Activated CD4-positive, alpha-beta memory T cell treated with anti-CD3 and anti-CD28 coated beads for 36 hours (primary cell): ENCODE measurements at regions of chr17 and their contacts with region 1.

Region 1: DNA sequence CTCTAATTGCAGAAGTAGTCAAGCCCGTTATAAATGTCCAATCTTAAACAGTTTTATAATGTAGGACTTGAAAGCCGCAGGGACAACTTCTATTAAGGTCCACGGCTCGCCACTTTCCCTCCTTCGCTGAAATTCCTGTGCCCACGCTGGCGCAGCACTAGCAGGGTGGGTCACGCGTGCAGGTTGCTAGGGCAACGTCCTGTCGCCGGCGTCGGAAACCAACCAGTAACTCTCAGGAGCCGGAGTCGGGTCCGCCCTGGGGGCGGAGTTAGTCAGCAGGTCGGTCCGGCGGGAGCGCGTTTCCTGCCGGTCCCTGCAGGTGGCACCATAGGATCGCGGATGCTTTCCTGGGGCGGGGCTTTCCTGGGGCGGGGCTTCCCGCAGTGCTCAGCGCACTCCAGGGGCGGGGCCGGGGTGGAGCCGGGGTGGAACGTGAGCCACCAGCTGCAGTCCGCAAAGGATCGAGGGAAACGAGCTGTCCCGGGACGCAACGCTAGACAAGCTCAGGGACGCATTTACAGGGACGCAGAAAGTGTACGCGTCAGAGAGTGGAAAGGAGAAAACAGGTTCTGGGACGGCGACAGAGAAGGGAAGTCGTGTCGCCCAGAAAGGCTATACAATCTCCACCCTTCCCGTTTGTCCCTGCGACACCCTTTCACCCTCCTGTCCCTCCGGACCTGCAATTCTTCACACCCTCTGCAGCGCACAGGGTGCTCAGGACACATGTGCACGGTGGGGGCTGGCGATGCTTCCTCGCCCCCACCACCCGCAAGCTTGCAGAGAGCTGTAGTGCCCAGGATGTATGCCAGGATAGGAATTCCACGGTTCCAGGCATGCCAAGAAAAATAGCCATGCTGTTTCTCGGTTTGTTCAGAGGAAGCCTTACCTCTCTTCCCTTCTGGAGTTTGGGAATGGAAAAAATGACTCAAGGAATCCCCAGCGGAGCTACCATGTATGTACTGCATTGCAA is 12.4 kb downstream of the COPZ2 start:
- DNase-seq: peak; percentile 99
- H3K4me3 Mint-ChIP-seq: peak overlapping the region; percentile 82
- H3K27ac Mint-ChIP-seq: peak overlapping the region; percentile 34
- H3K4me1 Mint-ChIP-seq: peaks cover 22% of the 10 kb centered on the region
- H3K27me3 Mint-ChIP-seq: peaks cover 11% of the 10 kb centered on the region

Region 2: DNA sequence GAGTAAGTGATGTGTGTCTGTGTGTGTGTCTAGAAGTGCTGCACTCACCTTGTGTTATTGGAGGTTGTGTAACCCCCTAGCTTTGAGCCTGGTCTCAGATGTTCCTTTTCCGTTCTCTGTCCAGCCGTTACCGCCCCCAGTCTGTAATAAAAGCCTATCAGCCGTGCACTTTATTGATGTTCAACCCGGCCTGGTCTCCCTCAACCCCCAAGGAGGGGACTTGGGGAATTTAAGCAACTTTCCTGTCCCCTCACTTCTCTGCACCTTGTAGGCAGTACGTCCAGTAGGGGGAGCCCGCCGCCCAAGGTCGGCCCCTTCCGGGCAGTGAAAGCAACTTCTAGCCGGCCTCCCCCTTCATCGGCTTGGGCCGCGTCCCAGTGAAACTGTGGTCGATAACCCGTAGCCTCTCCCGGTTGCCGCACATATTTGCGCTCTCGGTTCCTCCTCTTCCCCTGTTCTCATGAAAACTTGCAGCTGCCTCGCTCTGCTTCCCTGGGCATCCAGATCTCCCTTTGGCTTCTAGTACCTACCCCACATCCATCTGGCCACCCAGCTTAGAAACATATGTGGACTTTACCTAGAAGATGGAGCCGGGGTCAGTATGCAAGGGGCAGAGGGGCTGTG is 76.0 kb before region 1 on chr17:
- CTCF ChIA-PET with region 1: interaction called, 15 read pairs
- POLR2A ChIA-PET with region 1: no interaction called
- intact Hi-C with region 1: no loop called
- DNase-seq: peak; percentile 87
- H3K4me3 Mint-ChIP-seq: peak overlapping the region; percentile 51
- H3K27ac Mint-ChIP-seq: peak overlapping the region; percentile 63
- H3K4me1 Mint-ChIP-seq: peaks cover 28% of the 10 kb centered on the region
- H3K27me3 Mint-ChIP-seq: no peaks in the 10 kb centered on the region

Region 3: GRCh38 chr17:48037036-48037837 is 12.0 kb after region 1 on chr17 and contains the start of gene COPZ2:
- CTCF ChIA-PET with region 1: interaction called, 40 read pairs
- POLR2A ChIA-PET with region 1: interaction called, 4 read pairs
- intact Hi-C with region 1: no loop called
- DNase-seq: peak; percentile 76
- H3K4me3 Mint-ChIP-seq: peak within 1 kb of the TSS; percentile 78
- H3K27ac Mint-ChIP-seq: no peak within 1 kb of the TSS
- H3K4me1 Mint-ChIP-seq: peaks cover 7% of the 10 kb centered on the region
- H3K27me3 Mint-ChIP-seq: peaks cover 36% of the 10 kb centered on the region
- total RNA-seq, gene COPZ2: 4.9 to 6.2 TPM

Region 4: GRCh38 chr17:48068491-48068961 is 43.3 kb after region 1 on chr17:
- CTCF ChIA-PET with region 1: interaction called, 137 read pairs
- POLR2A ChIA-PET with region 1: interaction called, 3 read pairs
- intact Hi-C with region 1: no loop called
- DNase-seq: peak; percentile 24
- H3K4me3 Mint-ChIP-seq: no peak overlapping the region
- H3K27ac Mint-ChIP-seq: no peak overlapping the region
- H3K4me1 Mint-ChIP-seq: no peaks in the 10 kb centered on the region
- H3K27me3 Mint-ChIP-seq: no peaks in the 10 kb centered on the region

Region 5: GRCh38 chr17:48101012-48101720 is 75.9 kb after region 1 on chr17 and contains the start of gene CBX1:
- CTCF ChIA-PET with region 1: interaction called, 9 read pairs
- POLR2A ChIA-PET with region 1: no interaction called
- intact Hi-C with region 1: loop called (anchors 1 kb)
- DNase-seq: peak; percentile 96
- H3K4me3 Mint-ChIP-seq: peak within 1 kb of the TSS; percentile 98
- H3K27ac Mint-ChIP-seq: peak within 1 kb of the TSS; percentile 89
- H3K4me1 Mint-ChIP-seq: peaks cover 40% of the 10 kb centered on the region
- H3K27me3 Mint-ChIP-seq: no peaks in the 10 kb centered on the region
- total RNA-seq, gene CBX1: 55.3 to 56.7 TPM

Region 6: GRCh38 chr17:48406936-48407567 is 381.8 kb after region 1 on chr17:
- CTCF ChIA-PET with region 1: no interaction called
- POLR2A ChIA-PET with region 1: no interaction called
- intact Hi-C with region 1: no loop called
- DNase-seq: no peak
- H3K4me3 Mint-ChIP-seq: peak overlapping the region; percentile 14
- H3K27ac Mint-ChIP-seq: peak overlapping the region; percentile 81
- H3K4me1 Mint-ChIP-seq: peaks cover 62% of the 10 kb centered on the region
- H3K27me3 Mint-ChIP-seq: no peaks in the 10 kb centered on the region

Region 7: DNA sequence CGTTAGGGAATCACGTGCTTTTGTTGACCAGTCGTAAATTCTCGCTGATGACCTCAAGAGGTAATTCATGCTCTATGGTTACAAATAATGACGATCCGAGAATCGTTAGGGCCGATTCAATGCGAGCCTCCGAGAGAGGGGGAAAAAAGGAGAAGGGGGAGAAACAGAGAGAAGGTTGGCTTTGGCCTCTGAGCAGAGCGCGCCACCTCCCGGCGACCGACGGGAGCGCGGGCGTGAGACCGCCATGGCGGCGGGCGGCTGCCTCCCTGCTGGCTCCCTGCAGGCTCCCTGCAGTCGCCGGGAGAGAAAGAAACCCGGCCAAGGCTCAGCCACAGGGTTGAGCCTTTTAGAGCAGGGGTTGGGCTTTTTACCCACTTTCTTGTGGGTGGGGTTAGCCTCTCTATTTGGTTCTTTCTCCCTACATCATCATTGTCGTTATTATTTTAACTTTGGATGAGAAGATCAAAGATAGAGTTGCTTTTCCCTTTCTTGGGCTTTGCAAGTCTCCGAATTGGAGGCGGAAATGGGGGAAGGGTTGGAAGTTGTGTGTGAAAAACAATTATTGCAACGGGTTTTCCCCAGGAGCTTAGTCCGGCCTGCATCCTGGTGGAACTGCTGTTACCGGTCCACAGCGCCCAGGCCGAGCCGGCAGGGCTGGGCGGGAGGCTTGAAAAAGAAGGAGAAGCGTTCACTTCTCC is 568.8 kb after region 1 on chr17:
- CTCF ChIA-PET with region 1: interaction called, 7 read pairs
- POLR2A ChIA-PET with region 1: no interaction called
- intact Hi-C with region 1: loop called (anchors 5 kb)
- DNase-seq: peak; percentile 88
- H3K4me3 Mint-ChIP-seq: peak overlapping the region; percentile 72
- H3K27ac Mint-ChIP-seq: no peak overlapping the region
- H3K4me1 Mint-ChIP-seq: peaks cover 31% of the 10 kb centered on the region
- H3K27me3 Mint-ChIP-seq: peaks cover 73% of the 10 kb centered on the region